ENCODE measurements at regions of chr19 and their contacts with region 1.

Region 1: GRCh38 chr19:48249502-48250014 is 6.2 kb downstream of the CARD8 start:
- DNase-seq: peak; percentile 46 to 88 (median 68)
- ATAC-seq: peak; percentile 91
- H3K4me3 ChIP-seq: peak overlapping the region; percentile 67
- H3K4me3 Mint-ChIP-seq: peak overlapping the region; percentile 93
- H3K27ac ChIP-seq: peak overlapping the region; percentile 91 to 94
- H3K27ac Mint-ChIP-seq: peak overlapping the region; percentile 99
- H3K4me1 ChIP-seq: peaks cover 63% of the 10 kb centered on the region
- H3K4me1 Mint-ChIP-seq: peaks cover 86% of the 10 kb centered on the region
- H3K27me3 ChIP-seq: no peaks in the 10 kb centered on the region
- H3K27me3 Mint-ChIP-seq: no peaks in the 10 kb centered on the region
- CTCF ChIP-seq: no peak

Region 2: DNA sequence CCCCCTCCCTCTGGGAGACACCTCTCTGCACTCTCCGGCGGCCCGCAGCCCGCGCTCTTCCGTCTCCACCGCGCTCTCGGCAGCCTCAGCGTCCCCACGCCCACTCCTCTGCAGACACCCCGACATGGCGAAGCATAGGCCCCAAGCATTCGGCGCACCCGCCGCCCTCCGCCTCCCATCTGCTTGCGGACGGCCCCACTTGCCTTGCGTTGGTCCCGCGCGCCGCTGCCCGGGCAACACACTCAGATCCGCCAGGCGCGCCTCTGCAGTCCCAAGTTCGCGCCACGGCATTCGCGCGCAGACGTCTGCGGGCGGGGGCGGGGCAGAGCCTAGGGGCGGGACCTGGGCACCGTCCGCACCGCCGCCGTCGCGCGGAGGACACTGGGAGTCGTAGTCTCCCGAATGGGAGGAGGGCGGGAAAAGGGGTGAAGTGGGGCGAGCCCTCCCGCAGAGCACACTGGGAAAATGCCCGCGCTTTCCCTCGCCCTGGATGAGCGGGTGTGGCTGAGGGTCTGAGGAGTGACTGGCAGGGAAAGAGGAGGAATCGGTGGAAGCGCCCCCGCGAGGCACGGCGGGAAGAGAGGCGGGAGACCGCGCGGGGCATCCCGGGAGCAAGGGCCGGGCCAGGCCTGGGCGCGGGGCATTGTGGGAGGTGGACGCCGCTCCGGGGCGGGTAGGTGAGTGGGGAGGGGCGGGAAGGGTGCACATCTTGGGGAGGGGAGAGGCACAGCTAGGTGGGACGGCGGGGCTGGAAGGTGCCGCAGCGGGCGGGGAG is 79.3 kb before region 1 on chr19 and contains the starts of genes LIG1 and ZSWIM9:
- CTCF ChIA-PET with region 1: no interaction called
- POLR2A ChIA-PET with region 1: interaction called, 3 read pairs
- intact Hi-C with region 1: loop called (anchors 2 to 10 kb)
- DNase-seq: peak; percentile 82 to 96 (median 88)
- ATAC-seq: peak; percentile 81
- H3K4me3 ChIP-seq: peak within 1 kb of the TSS; percentile 88
- H3K4me3 Mint-ChIP-seq: peak within 1 kb of the TSS; percentile 97
- H3K27ac ChIP-seq: peak within 1 kb of the TSS; percentile 91 to 92
- H3K27ac Mint-ChIP-seq: peak within 1 kb of the TSS; percentile 98
- H3K4me1 ChIP-seq: peaks cover 16% of the 10 kb centered on the region
- H3K4me1 Mint-ChIP-seq: peaks cover 39% of the 10 kb centered on the region
- H3K27me3 ChIP-seq: no peaks in the 10 kb centered on the region
- H3K27me3 Mint-ChIP-seq: no peaks in the 10 kb centered on the region
- CTCF ChIP-seq: no peak
- total RNA-seq, gene LIG1: 62.8 to 70.7 TPM
- total RNA-seq, gene ZSWIM9: 2.5 to 3.1 TPM

Region 3: DNA sequence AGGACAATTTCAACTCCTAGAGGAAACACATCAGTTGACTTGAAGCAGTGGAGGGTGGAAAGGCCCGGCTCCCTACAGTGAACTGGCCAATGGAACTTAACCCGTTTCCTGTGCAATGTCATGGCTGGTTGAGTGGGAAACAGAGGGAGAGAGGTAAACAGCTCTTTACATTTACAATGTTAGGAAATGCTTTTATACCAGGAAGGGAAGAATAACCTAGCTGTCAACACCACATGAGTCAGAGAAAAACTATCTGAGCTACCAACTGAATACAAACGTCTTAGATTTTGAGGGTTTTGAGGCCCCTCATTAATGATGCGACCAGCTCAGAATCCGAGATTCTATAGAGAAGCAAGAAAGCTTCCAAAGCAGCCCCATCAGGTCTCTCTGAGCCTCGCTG is 30.6 kb before region 1 on chr19:
- CTCF ChIA-PET with region 1: no interaction called
- POLR2A ChIA-PET with region 1: no interaction called
- intact Hi-C with region 1: no loop called
- DNase-seq: no peak
- ATAC-seq: no peak
- H3K4me3 ChIP-seq: no peak overlapping the region
- H3K4me3 Mint-ChIP-seq: no peak overlapping the region
- H3K27ac ChIP-seq: no peak overlapping the region
- H3K27ac Mint-ChIP-seq: no peak overlapping the region
- H3K4me1 ChIP-seq: no peaks in the 10 kb centered on the region
- H3K4me1 Mint-ChIP-seq: peaks cover 4% of the 10 kb centered on the region
- H3K27me3 ChIP-seq: no peaks in the 10 kb centered on the region
- H3K27me3 Mint-ChIP-seq: no peaks in the 10 kb centered on the region
- CTCF ChIP-seq: no peak

Region 4: GRCh38 chr19:48271531-48272151 is 22.1 kb after region 1 on chr19:
- CTCF ChIA-PET with region 1: no interaction called
- POLR2A ChIA-PET with region 1: no interaction called
- intact Hi-C with region 1: no loop called
- DNase-seq: peak in 3 of 14 experiments; percentile 19 to 26 (median 23)
- ATAC-seq: no peak
- H3K4me3 ChIP-seq: peak overlapping the region; percentile 55
- H3K4me3 Mint-ChIP-seq: peak overlapping the region; percentile 63
- H3K27ac ChIP-seq: no peak overlapping the region
- H3K27ac Mint-ChIP-seq: no peak overlapping the region
- H3K4me1 ChIP-seq: peaks cover 18% of the 10 kb centered on the region
- H3K4me1 Mint-ChIP-seq: peaks cover 20% of the 10 kb centered on the region
- H3K27me3 ChIP-seq: peaks cover 0 to 14% of the 10 kb centered on the region in 2 experiments
- H3K27me3 Mint-ChIP-seq: peaks cover 31% of the 10 kb centered on the region
- CTCF ChIP-seq: no peak